G401 (cell line): ENCODE measurements at regions of chr1 and their contacts with region 1.

Region 1: DNA sequence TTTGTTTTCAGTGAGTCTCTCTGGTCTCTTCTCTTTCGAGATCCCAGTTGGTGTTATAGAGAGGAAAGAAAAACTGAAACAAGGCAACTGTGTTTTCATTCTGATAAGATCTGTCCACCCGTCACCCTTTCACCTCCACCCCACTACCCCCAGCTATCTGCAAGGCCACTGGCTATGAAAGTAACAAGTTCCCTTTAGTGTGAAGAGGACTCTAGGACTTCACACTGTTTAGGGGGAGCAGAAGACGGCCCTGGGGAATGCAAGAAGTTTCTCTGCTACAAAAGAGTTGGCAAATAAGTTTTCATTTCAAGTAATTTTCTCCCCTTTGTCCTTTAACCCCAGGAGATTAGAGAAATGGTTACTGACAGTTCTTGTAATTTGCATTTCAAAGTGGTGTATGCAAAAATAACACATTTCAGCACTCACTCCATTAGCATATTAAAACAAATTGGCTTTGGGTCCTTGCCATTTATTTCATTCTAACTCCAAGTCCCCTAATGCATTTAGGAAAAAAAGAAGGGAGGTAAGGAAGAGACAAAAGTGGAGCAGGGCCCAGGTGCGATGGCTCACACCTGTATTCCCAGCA is 79.6 kb upstream of the PPM1J start:
- DNase-seq: no peak

Region 2: DNA sequence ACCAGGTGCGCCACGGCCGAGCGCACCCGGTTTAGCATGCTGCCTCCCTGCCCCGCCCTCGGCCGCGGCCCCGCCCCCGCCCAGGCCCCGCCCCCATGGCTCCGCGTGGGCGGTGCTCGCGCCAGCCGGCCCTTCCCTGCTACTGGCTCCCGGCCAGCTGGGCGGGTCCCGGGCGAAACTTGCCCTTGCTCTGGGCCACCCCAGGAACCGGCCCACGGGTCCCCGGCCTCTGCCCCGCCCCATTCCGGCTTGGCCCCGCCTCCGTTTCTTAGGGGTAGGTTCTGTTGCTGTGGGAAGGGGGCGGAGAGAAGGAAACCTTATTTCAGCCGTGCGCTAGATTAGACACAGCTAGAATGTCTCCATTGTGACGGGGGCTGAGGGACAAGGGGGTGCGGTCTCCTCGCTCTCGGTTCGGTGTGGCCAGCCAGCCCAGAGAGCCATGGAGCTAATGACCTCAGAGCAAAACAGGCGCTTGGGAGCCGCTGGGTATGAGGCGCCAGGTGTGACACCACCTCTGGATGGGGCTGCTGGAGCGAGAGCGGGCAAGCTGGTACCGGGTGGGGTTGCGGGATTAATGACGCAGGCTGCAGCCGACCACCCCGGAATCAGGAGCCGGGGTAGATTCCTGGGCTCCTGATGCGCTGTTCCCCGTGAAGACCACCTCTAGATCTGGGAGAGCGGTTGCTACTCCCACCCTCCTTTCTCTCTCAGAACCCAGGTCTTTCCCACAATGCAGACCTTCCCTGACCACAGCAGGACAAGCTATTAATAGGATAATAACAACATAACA is 79.3 kb before region 1 on chr1 and contains the start of gene PPM1J:
- in situ Hi-C with region 1: loop called (anchors 5 kb)
- DNase-seq: peak; percentile 79
- total RNA-seq, gene PPM1J: 10.1 and 13.2 TPM in 2 replicates

Region 3: DNA sequence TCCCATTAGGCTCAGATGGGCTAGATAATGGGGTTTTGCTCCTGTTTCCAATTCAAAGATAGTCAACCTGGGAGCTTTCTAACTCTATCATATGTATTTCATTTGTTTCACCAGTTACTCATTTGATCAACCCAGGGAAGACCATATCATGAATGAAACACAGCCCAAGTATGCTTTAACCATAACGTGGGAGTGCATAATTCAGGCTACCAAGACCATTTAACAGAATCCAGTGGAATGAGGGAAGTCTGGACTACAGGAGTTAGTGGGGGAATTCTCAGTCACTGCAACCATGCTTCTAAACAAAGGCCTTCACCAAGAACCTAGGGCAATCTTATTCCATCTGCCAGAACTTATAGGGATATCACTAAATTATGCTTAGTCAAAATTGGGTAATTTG is 176.3 kb after region 1 on chr1:
- in situ Hi-C with region 1: no loop called
- DNase-seq: no peak